HepG2 (cell line): ENCODE measurements at regions of chr3 and their contacts with region 1.

Region 1: DNA sequence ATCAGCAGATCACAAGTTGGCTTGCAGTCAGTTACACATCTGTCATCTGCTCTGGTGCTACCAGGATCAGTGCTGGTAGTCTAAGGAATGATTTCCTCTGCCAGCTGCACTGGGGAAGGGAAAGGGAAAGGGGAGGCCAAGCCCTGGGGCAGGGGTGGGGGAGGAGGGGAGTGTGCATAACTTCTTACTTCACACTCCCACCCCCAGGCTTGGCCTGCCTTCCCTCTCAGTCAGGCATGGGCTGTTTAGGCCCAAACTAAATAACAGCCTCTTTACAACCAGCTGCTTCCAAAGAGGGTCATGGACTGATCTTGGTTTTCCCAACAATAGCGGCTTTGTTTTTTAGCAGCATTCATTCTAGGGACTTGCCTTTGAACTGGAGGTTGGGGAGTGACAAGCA is 86.1 kb upstream of the PSMD6 start:
- DNase-seq: peak; percentile 89
- ATAC-seq: peak; percentile 89
- H3K4me3 ChIP-seq: no peak overlapping the region
- H3K27ac ChIP-seq: no peak overlapping the region
- H3K4me1 ChIP-seq: peaks cover 43% of the 10 kb centered on the region
- H3K27me3 ChIP-seq: no peaks in the 10 kb centered on the region; a peak in 1 of 5 replicates
- CTCF ChIP-seq: no peak
- EP300 ChIP-seq: peak in 1 of 2 experiments; percentile 44; a peak in 1 of 4 replicates
- POLR2A ChIP-seq: no peak
- RAD21 ChIP-seq: no peak

Region 2: GRCh38 chr3:64121750-64122311 is 12.4 kb after region 1 on chr3:
- CTCF ChIA-PET with region 1: no interaction called
- POLR2A ChIA-PET with region 1: no interaction called
- in situ Hi-C with region 1: no loop called
- intact Hi-C with region 1: no loop called
- DNase-seq: no peak
- ATAC-seq: no peak
- H3K4me3 ChIP-seq: no peak overlapping the region
- H3K27ac ChIP-seq: no peak overlapping the region
- H3K4me1 ChIP-seq: no peaks in the 10 kb centered on the region
- H3K27me3 ChIP-seq: no peaks in the 10 kb centered on the region
- CTCF ChIP-seq: no peak
- EP300 ChIP-seq: no peak
- POLR2A ChIP-seq: no peak
- RAD21 ChIP-seq: no peak

Region 3: GRCh38 chr3:64150623-64151207 is 41.3 kb after region 1 on chr3:
- CTCF ChIA-PET with region 1: no interaction called
- POLR2A ChIA-PET with region 1: no interaction called
- in situ Hi-C with region 1: no loop called
- intact Hi-C with region 1: loop called (anchors 2 kb)
- DNase-seq: peak; percentile 68
- ATAC-seq: peak; percentile 100
- H3K4me3 ChIP-seq: no peak overlapping the region
- H3K27ac ChIP-seq: no peak overlapping the region
- H3K4me1 ChIP-seq: peaks cover 16% of the 10 kb centered on the region
- H3K27me3 ChIP-seq: no peaks in the 10 kb centered on the region
- CTCF ChIP-seq: no peak
- EP300 ChIP-seq: no peak
- POLR2A ChIP-seq: no peak
- RAD21 ChIP-seq: no peak